Activated CD4-positive, alpha-beta memory T cell treated with anti-CD3 and anti-CD28 coated beads, Interleukin-2, amount 10 ng/mL, durations not matched to agents 7 days and 5 days (primary cell): ENCODE measurements at regions of chr12 and their contacts with region 1.

Region 1: DNA sequence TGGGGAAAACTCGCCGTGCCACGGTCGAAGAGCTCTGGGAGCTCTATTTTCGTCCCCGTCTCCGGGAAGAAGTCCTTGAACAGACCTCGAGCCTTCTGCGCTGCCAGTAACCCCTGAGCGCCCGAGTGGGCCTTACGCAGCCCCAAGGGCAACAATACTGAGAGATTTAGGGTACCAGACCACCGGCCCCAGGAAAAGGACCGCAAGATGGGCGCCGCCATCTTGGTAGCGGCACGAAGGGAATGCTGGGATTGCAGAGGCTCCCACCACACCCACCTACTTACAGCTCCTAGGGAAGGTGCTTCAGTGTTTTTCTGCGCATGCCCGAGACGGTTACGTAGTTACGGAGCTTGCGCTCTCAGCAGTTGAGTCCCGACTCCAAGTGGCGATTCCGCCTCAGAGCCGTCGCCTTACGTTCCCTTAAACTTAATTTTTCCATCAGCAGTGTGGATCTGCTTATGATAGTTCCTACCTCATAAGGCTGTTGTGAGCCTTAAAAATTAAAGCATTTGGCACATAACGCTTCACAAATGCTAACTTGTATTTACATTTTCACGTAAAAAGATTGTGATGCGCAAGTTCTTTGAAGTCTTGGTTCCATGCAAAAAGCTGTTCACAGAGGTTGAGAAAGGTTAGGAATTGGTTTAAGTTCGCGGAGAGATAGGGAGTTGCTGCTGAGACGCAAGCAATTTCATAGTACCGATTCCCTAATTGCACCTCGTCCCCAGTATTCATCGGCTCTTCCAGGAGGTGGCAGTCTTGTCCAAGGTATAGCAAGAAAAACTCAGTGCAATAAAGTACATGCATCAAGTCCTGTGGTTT is at the start of gene YARS2:
- DNase-seq: peak; percentile 90
- H3K4me3 Mint-ChIP-seq: peak within 1 kb of the TSS; percentile 79
- H3K27ac Mint-ChIP-seq: peak within 1 kb of the TSS; percentile 78
- H3K4me1 Mint-ChIP-seq: peaks cover 20% of the 10 kb centered on the region
- H3K27me3 Mint-ChIP-seq: peaks cover 1% of the 10 kb centered on the region
- total RNA-seq, gene YARS2: 17.0 to 19.3 TPM

Region 2: GRCh38 chr12:32365473-32366064 is 390.3 kb before region 1 on chr12:
- CTCF ChIA-PET with region 1: interaction called, 21 read pairs
- POLR2A ChIA-PET with region 1: no interaction called
- DNase-seq: peak; percentile 45
- H3K4me3 Mint-ChIP-seq: no peak overlapping the region
- H3K27ac Mint-ChIP-seq: no peak overlapping the region
- H3K4me1 Mint-ChIP-seq: no peaks in the 10 kb centered on the region
- H3K27me3 Mint-ChIP-seq: no peaks in the 10 kb centered on the region

Region 3: DNA sequence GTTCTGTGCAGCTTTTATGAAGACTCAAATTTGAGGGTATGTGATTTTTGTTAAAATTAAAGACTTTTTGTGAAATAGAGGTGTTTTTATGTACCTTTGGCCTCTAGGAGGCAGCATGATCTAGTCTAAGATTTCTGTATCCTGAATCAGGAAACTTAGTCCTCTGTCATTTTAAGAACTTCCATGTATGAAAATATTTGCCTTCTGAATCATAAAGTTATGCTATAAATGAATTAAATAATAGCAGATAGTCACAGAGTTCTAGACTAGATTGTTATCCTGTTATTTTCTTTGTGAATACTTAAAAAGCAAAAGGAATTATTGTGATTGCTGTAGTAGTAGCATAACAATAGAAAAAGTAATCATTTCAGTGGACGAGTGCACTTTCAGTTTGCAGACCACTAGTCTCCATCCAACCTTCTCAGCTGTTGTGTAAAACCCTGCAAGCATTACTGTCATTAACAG is 300.2 kb before region 1 on chr12:
- CTCF ChIA-PET with region 1: interaction called, 31 read pairs
- POLR2A ChIA-PET with region 1: interaction called, 8 read pairs
- DNase-seq: no peak
- H3K4me3 Mint-ChIP-seq: no peak overlapping the region
- H3K27ac Mint-ChIP-seq: no peak overlapping the region
- H3K4me1 Mint-ChIP-seq: no peaks in the 10 kb centered on the region
- H3K27me3 Mint-ChIP-seq: peaks cover 7% of the 10 kb centered on the region

Region 4: DNA sequence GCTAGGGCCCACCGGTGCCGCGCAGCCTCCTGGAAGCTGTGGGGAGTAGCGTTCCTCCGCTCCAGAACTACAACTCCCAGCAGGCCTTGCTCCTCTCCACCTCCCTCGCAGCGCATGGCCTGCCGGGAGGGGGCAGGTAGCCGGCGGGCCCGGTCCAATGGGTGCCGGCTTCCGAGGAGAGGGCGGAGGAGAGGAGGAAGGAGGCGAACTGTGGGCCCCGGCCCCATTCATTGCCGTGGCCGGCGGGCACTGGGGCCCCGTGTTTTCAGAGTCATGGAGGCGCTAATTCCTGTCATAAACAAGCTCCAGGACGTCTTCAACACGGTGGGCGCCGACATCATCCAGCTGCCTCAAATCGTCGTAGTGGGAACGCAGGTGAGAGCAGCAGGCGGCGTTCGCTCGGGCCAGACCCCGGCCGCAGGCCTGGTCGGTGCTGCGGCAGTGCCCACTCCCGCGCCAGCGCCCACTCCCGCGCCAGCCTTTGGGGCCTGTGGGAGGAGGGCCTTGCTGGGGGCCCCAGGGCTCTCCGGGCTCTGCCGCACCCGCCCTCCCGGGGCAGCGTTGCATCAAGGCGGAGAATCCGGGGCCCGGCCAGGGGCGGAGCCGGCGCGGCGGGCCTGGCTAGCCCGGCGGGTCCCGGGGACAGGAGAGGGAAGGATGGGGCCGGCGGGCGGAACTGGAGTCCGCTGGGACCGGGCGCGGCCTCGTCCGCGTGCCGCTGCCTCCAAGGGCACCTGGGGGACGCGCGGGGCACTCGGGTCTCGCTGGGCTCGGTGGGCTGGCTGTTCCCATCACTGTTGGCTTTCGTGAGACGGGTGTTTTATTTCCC is 76.6 kb before region 1 on chr12 and contains the start of gene DNM1L:
- CTCF ChIA-PET with region 1: interaction called, 17 read pairs
- POLR2A ChIA-PET with region 1: interaction called, 27 read pairs
- DNase-seq: peak; percentile 94
- H3K4me3 Mint-ChIP-seq: peak within 1 kb of the TSS; percentile 82
- H3K27ac Mint-ChIP-seq: peak within 1 kb of the TSS; percentile 81
- H3K4me1 Mint-ChIP-seq: peaks cover 33% of the 10 kb centered on the region
- H3K27me3 Mint-ChIP-seq: no peaks in the 10 kb centered on the region
- total RNA-seq, gene DNM1L: 53.5 to 59.3 TPM

Region 5: DNA sequence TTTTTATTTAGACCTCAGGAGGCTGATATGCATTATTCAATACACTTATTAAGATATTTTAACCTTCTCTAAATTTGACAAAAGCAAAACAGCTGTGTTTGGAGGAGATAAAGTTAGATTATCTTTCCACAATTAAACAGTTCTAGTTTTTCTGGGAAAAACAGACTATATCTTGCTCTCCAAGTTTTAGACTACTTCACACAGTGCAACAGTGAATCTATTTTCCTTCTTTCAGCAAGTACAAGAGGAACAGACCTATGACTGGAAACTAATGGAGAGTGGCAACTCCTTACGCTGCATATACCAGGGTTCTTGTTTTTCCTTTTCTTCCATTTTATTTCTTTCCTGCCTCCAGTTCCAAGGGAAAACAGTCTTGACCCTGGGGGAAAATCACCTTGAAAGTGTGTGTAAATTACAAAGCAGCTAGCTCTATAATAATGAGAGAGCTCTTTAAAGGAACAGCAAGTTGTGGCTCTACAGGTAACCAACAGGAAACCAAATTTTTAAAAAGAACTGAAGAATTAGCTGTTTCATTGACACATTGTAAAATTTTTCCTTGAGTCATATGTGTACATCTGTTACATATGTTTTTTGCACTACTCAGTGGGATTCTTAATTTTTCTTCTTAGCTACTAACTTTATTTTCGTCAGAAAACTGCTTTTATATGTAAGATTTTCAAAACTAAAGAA is 49.4 kb before region 1 on chr12:
- CTCF ChIA-PET with region 1: interaction called, 34 read pairs
- POLR2A ChIA-PET with region 1: interaction called, 3 read pairs
- DNase-seq: no peak
- H3K4me3 Mint-ChIP-seq: no peak overlapping the region
- H3K27ac Mint-ChIP-seq: peak overlapping the region; percentile 34
- H3K4me1 Mint-ChIP-seq: peaks cover 19% of the 10 kb centered on the region
- H3K27me3 Mint-ChIP-seq: no peaks in the 10 kb centered on the region

Region 6: DNA sequence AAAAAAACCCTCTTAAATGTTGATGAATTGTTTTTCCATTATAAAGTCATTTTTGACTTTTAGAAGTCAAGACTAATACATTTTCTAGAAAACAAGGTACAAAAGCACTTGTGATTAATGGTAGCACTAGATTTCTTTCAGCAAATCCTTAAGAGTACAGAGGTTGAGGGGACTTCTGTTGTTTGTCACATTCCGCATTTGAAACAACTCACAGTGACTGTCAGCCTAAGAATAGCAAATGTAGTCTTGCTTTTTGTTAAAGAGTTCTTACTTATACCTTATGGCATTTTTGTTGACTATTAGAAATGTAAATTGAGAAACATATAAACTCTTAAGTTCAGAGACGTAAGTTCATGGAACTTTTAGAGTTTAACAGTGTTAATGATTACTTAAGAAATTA is 16.6 kb before region 1 on chr12:
- CTCF ChIA-PET with region 1: interaction called, 47 read pairs
- POLR2A ChIA-PET with region 1: interaction called, 14 read pairs
- DNase-seq: no peak
- H3K4me3 Mint-ChIP-seq: no peak overlapping the region
- H3K27ac Mint-ChIP-seq: no peak overlapping the region
- H3K4me1 Mint-ChIP-seq: peaks cover 3% of the 10 kb centered on the region
- H3K27me3 Mint-ChIP-seq: no peaks in the 10 kb centered on the region

Region 7: GRCh38 chr12:34022079-34022830 is 1266.4 kb after region 1 on chr12 and contains the start of gene ALG10:
- CTCF ChIA-PET with region 1: interaction called, 87 read pairs
- POLR2A ChIA-PET with region 1: interaction called, 39 read pairs
- DNase-seq: peak; percentile 96
- H3K4me3 Mint-ChIP-seq: peak within 1 kb of the TSS; percentile 87
- H3K27ac Mint-ChIP-seq: peak within 1 kb of the TSS; percentile 75
- H3K4me1 Mint-ChIP-seq: peaks cover 26% of the 10 kb centered on the region
- H3K27me3 Mint-ChIP-seq: no peaks in the 10 kb centered on the region
- total RNA-seq, gene ALG10: 17.6 to 18.4 TPM